Sigmoid colon (tissue), 7 donors: ENCODE measurements at regions of chr19 and their contacts with region 1.

Region 1: GRCh38 chr19:6737284-6738046 is at the start of gene GPR108:
- DNase-seq: peak; percentile 100
- H3K4me3 ChIP-seq: peak within 1 kb of the TSS; percentile 54 to 92 (median 88)
- H3K27ac ChIP-seq: peak within 1 kb of the TSS; percentile 95 to 97 (median 96)
- H3K4me1 ChIP-seq: peaks cover 0 to 63% (median 45%) of the 10 kb centered on the region in 4 donors
- H3K27me3 ChIP-seq: no peaks in the 10 kb centered on the region
- CTCF ChIP-seq: no peak
- EP300 ChIP-seq: peak in 1 of 4 donors; percentile 2
- POLR2A ChIP-seq: peak in 1 of 2 donors; percentile 54
- total RNA-seq, gene GPR108: 44.5 to 67.3 (median 58.8) TPM

Region 2: GRCh38 chr19:6516659-6517291 is 220.7 kb before region 1 on chr19:
- intact Hi-C with region 1: loop called (anchors 2 kb)
- DNase-seq: peak; percentile 92
- H3K4me3 ChIP-seq: peak overlapping the region; percentile 44 to 63 (median 62)
- H3K27ac ChIP-seq: peak overlapping the region; percentile 71 to 85 (median 78)
- H3K4me1 ChIP-seq: peaks cover 0 to 14% (median 10%) of the 10 kb centered on the region in 4 donors
- H3K27me3 ChIP-seq: no peaks in the 10 kb centered on the region
- CTCF ChIP-seq: peak; percentile 89 to 96 (median 92)
- EP300 ChIP-seq: no peak
- POLR2A ChIP-seq: no peak

Region 3: GRCh38 chr19:6632002-6632621 is 105.4 kb before region 1 on chr19:
- intact Hi-C with region 1: loop called (anchors 5 kb)
- DNase-seq: peak; percentile 82
- H3K4me3 ChIP-seq: no peak overlapping the region
- H3K27ac ChIP-seq: no peak overlapping the region
- H3K4me1 ChIP-seq: no peaks in the 10 kb centered on the region
- H3K27me3 ChIP-seq: peaks cover 0 to 7% (median 0%) of the 10 kb centered on the region in 3 donors
- CTCF ChIP-seq: peak; percentile 58 to 87 (median 74)
- EP300 ChIP-seq: no peak
- POLR2A ChIP-seq: no peak

Region 4: GRCh38 chr19:6685962-6686627 is 51.4 kb before region 1 on chr19:
- intact Hi-C with region 1: no loop called
- DNase-seq: no peak
- H3K4me3 ChIP-seq: no peak overlapping the region
- H3K27ac ChIP-seq: no peak overlapping the region
- H3K4me1 ChIP-seq: no peaks in the 10 kb centered on the region
- H3K27me3 ChIP-seq: no peaks in the 10 kb centered on the region
- CTCF ChIP-seq: no peak
- EP300 ChIP-seq: no peak
- POLR2A ChIP-seq: no peak

Region 5: DNA sequence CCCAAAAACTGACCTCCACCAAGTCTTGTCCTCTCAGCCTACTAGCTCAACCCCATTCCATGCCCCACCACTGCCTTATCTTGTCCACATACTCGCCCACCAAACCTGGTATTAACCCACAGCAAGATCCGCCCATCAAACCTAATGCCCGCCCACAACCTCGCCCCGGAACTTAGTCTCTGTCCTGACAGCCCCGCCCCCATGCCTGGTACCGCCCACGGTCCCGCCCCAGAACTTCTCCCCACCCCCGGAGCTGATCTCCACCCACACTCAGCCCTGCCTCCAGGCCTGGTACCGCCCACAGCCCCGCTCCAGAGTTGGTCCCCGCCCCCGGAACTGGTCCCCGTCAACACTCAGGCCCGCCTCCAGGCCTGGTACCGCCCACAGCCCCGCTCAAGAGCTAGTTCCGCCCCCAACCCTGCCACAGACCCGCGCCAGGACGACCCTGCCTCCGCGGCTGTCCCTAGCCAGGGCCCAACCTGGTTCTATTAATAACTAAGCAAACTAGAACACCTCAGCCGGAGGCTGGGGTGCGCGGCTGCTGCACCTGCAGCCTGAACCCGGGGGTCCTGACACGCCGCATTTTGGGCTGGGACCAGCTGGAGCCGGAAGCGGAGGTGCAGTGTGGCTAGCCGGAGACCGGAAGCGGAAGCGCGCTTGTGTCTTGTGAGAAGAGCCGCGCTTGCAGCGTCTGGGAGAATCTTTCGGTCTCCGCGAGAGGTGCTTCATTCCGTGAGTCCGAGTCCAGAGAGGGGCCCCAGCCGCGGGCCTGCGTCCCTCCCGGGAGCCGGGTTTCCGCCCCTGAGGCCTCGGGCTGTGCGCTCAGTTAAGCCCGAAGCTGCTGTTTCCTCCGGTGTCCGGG is 331.8 kb after region 1 on chr19 and contains the start of gene ZNF557:
- intact Hi-C with region 1: loop called (anchors 10 kb)
- DNase-seq: peak; percentile 99
- H3K4me3 ChIP-seq: peak within 1 kb of the TSS; percentile 76 to 97 (median 90)
- H3K27ac ChIP-seq: peak within 1 kb of the TSS; percentile 78 to 84 (median 82)
- H3K4me1 ChIP-seq: peaks cover 0 to 14% (median 9%) of the 10 kb centered on the region in 4 donors
- H3K27me3 ChIP-seq: no peaks in the 10 kb centered on the region
- CTCF ChIP-seq: no peak
- EP300 ChIP-seq: no peak
- POLR2A ChIP-seq: no peak
- total RNA-seq, gene ZNF557: 6.9 to 10.0 (median 8.8) TPM

Region 6: GRCh38 chr19:7919610-7920518 is 1182.4 kb after region 1 on chr19 and contains the start of gene SNAPC2:
- intact Hi-C with region 1: loop called (anchors 10 kb)
- DNase-seq: peak; percentile 98
- H3K4me3 ChIP-seq: peak within 1 kb of the TSS; percentile 70 to 87 (median 74)
- H3K27ac ChIP-seq: peak within 1 kb of the TSS; percentile 93 to 98 (median 96)
- H3K4me1 ChIP-seq: peaks cover 0 to 83% (median 81%) of the 10 kb centered on the region in 4 donors
- H3K27me3 ChIP-seq: peaks cover 38 to 47% (median 44%) of the 10 kb centered on the region in 3 donors
- CTCF ChIP-seq: no peak
- EP300 ChIP-seq: peak in 1 of 4 donors; percentile 64
- POLR2A ChIP-seq: peak; percentile 22 to 59
- total RNA-seq, gene SNAPC2: 20.3 to 31.2 (median 27.8) TPM